CD4-positive, alpha-beta T cell (primary cell): ENCODE measurements at regions of chr10 and their contacts with region 1.

Region 1: GRCh38 chr10:119383174-119383856 is 159.2 kb downstream of the RGS10 start:
- DNase-seq: peak in 1 of 14 experiments; percentile 30
- ATAC-seq: no peak
- H3K4me3 ChIP-seq: no peak overlapping the region
- H3K4me3 Mint-ChIP-seq: no peak overlapping the region
- H3K27ac ChIP-seq: no peak overlapping the region
- H3K27ac Mint-ChIP-seq: peak overlapping the region; percentile 69
- H3K4me1 ChIP-seq: peaks cover 10% of the 10 kb centered on the region
- H3K4me1 Mint-ChIP-seq: peaks cover 25% of the 10 kb centered on the region
- H3K27me3 ChIP-seq: no peaks in the 10 kb centered on the region
- H3K27me3 Mint-ChIP-seq: no peaks in the 10 kb centered on the region
- CTCF ChIP-seq: no peak

Region 2: DNA sequence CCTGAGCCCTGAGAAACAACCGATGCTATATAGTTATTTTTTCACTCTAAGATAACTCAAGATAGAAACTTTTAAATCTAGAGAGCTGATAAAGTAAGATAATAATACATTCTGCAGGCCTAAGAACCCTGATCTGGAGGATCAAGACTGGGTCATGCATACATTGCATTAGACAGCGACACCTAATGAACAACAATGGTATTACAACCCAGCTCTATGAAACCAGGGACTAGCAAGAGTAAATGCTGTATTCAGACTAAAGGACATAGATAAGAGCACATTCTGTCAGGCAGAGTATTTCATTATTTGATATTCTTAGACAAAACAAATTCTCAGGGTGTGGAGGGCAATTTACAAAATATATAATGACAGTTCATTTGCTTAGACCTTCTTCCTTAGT is 27.4 kb before region 1 on chr10:
- CTCF ChIA-PET with region 1: no interaction called
- POLR2A ChIA-PET with region 1: no interaction called
- intact Hi-C with region 1: no loop called
- DNase-seq: peak in 1 of 14 experiments; percentile 18
- ATAC-seq: no peak
- H3K4me3 ChIP-seq: no peak overlapping the region
- H3K4me3 Mint-ChIP-seq: no peak overlapping the region
- H3K27ac ChIP-seq: no peak overlapping the region
- H3K27ac Mint-ChIP-seq: no peak overlapping the region
- H3K4me1 ChIP-seq: peaks cover 2% of the 10 kb centered on the region
- H3K4me1 Mint-ChIP-seq: peaks cover 14% of the 10 kb centered on the region
- H3K27me3 ChIP-seq: no peaks in the 10 kb centered on the region
- H3K27me3 Mint-ChIP-seq: no peaks in the 10 kb centered on the region
- CTCF ChIP-seq: peak; percentile 14

Region 3: GRCh38 chr10:119412244-119413092 is 29.2 kb after region 1 on chr10:
- CTCF ChIA-PET with region 1: no interaction called
- POLR2A ChIA-PET with region 1: no interaction called
- intact Hi-C with region 1: no loop called
- DNase-seq: no peak
- ATAC-seq: no peak
- H3K4me3 ChIP-seq: no peak overlapping the region
- H3K4me3 Mint-ChIP-seq: no peak overlapping the region
- H3K27ac ChIP-seq: no peak overlapping the region
- H3K27ac Mint-ChIP-seq: no peak overlapping the region
- H3K4me1 ChIP-seq: no peaks in the 10 kb centered on the region
- H3K4me1 Mint-ChIP-seq: no peaks in the 10 kb centered on the region
- H3K27me3 ChIP-seq: no peaks in the 10 kb centered on the region
- H3K27me3 Mint-ChIP-seq: no peaks in the 10 kb centered on the region
- CTCF ChIP-seq: no peak

Region 4: DNA sequence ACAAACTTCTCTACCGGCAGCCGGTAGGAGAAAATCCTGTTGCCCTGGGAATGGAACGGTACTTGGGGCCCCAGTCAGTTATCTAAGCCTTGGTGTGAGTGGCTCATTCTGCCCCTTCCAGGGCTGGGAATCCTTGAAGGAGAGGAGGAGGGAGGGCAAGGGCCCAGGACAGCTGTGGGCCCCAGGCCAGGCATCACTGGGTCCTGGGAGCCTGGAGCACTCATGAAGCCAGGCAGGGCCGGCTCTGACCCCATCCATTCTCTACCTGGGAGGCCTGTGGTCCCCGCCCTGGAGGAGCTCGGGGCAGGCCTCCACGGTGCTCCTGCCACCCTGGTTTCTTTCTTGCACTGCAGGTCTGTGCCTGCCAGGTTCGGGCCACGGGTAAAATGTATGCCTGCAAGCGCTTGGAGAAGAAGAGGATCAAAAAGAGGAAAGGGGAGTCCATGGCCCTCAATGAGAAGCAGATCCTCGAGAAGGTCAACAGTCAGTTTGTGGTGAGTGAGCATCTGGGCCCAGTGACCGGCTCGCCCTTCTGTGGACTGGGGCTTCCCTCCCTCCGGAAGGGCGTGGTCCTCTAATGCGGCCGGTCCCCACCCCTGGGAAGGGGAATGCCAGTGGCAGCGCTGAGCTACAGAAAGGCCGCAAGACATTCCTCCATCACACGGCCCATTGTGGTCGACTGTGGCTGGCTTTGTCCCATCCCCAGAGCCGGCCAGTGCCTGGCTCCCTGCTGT is 47.9 kb after region 1 on chr10:
- CTCF ChIA-PET with region 1: no interaction called
- POLR2A ChIA-PET with region 1: no interaction called
- intact Hi-C with region 1: loop called in 1 of 2 experiments (anchors 5 kb)
- DNase-seq: no peak
- ATAC-seq: no peak
- H3K4me3 ChIP-seq: no peak overlapping the region
- H3K4me3 Mint-ChIP-seq: no peak overlapping the region
- H3K27ac ChIP-seq: no peak overlapping the region
- H3K27ac Mint-ChIP-seq: no peak overlapping the region
- H3K4me1 ChIP-seq: peaks cover 13% of the 10 kb centered on the region
- H3K4me1 Mint-ChIP-seq: peaks cover 16% of the 10 kb centered on the region
- H3K27me3 ChIP-seq: no peaks in the 10 kb centered on the region
- H3K27me3 Mint-ChIP-seq: no peaks in the 10 kb centered on the region
- CTCF ChIP-seq: no peak